Psoas muscle (tissue), 8 donors: ENCODE measurements at regions of chr7 and their contacts with region 1.

Region 1: GRCh38 chr7:98168181-98168905 is 42.9 kb upstream of the BHLHA15 start:
- DNase-seq: peak in 1 of 2 donors; percentile 62
- ATAC-seq: peak; percentile 86 to 93 (median 90)
- H3K4me3 ChIP-seq: no peak overlapping the region
- H3K27ac ChIP-seq: peak overlapping the region; percentile 50
- H3K4me1 ChIP-seq: peaks cover 25% of the 10 kb centered on the region
- H3K27me3 ChIP-seq: no peaks in the 10 kb centered on the region
- CTCF ChIP-seq: peak; percentile 90

Region 2: GRCh38 chr7:98021588-98022351 is 146.6 kb before region 1 on chr7:
- intact Hi-C with region 1: loop called (anchors 2 to 5 kb)
- DNase-seq: peak; percentile 65 to 83
- ATAC-seq: peak; percentile 61 to 88 (median 68)
- H3K4me3 ChIP-seq: no peak overlapping the region
- H3K27ac ChIP-seq: no peak overlapping the region
- H3K4me1 ChIP-seq: no peaks in the 10 kb centered on the region
- H3K27me3 ChIP-seq: no peaks in the 10 kb centered on the region
- CTCF ChIP-seq: peak; percentile 82

Region 3: DNA sequence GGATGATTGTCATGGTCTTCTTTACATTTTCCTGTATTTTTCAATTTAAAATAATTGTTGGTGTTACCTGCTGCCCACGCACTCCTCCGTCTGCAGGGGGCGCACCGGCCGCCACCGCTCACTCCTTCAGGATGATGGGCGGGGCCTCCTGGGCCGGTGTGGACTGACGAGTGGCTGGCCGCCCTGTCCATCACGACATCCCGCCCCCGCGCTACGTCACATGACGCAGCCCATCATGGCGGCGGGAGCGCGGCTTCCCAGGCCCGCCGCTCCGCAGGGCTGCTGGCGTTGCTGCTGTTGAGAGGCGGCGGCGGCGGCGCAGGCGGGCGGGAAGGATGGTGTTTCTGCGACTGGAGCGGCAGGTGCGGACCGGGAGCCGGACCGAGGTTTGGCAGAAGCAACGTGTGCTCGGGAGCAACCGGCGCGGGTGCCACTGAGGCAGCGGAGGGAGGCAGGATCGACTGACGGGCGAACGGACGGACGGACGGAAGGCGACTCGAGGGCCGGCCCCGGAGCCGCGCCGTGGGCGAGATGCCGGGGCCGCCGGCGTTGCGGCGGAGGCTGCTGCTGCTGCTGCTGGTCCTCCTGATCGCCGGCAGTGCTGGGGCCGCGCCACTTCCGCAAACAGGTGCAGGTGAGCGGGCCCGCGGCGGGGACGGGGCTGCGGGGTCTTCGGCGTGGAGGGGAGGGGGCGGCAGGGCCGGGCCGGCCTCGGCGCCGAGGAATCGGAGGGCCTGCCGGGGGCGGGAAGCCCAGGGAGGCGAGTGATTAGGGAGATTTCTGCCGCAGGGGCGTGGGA is 61.5 kb before region 1 on chr7 and contains the start of gene LMTK2:
- intact Hi-C with region 1: loop called (anchors 1 to 2 kb)
- DNase-seq: peak; percentile 96 to 98
- ATAC-seq: peak; percentile 100
- H3K4me3 ChIP-seq: peak within 1 kb of the TSS; percentile 96
- H3K27ac ChIP-seq: peak within 1 kb of the TSS; percentile 92
- H3K4me1 ChIP-seq: peaks cover 16% of the 10 kb centered on the region
- H3K27me3 ChIP-seq: peaks cover 0 to 1% (median 0%) of the 10 kb centered on the region in 3 donors
- CTCF ChIP-seq: peak; percentile 95
- total RNA-seq, gene LMTK2: 12.7 to 25.0 (median 16.1) TPM

Region 4: DNA sequence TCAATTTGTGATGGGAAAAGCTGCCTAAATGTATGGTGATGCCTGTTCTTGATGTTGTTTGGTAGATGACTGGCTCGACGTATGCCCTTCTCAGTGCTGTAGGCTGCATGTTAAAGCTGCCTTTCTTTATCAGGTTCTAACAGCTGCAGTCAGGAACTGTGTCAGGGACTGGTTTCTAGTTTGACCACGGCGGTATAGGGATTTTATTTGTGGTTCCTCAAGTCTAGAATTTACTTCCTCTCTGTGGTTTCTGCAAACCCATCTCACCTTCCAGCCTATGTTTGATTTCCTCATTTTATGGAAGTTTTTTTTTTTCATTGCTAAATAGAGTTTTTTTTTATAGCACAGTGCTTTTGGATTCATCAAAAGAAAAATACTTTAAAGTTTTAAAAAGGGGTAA is 35.2 kb before region 1 on chr7:
- intact Hi-C with region 1: loop called in 1 of 2 experiments (anchors 5 kb)
- DNase-seq: no peak
- ATAC-seq: no peak
- H3K4me3 ChIP-seq: no peak overlapping the region
- H3K27ac ChIP-seq: no peak overlapping the region
- H3K4me1 ChIP-seq: peaks cover 16% of the 10 kb centered on the region
- H3K27me3 ChIP-seq: no peaks in the 10 kb centered on the region
- CTCF ChIP-seq: no peak

Region 5: GRCh38 chr7:98314469-98314868 is 146.1 kb after region 1 on chr7:
- intact Hi-C with region 1: no loop called
- DNase-seq: no peak
- ATAC-seq: no peak
- H3K4me3 ChIP-seq: no peak overlapping the region
- H3K27ac ChIP-seq: no peak overlapping the region
- H3K4me1 ChIP-seq: no peaks in the 10 kb centered on the region
- H3K27me3 ChIP-seq: no peaks in the 10 kb centered on the region
- CTCF ChIP-seq: no peak

Region 6: DNA sequence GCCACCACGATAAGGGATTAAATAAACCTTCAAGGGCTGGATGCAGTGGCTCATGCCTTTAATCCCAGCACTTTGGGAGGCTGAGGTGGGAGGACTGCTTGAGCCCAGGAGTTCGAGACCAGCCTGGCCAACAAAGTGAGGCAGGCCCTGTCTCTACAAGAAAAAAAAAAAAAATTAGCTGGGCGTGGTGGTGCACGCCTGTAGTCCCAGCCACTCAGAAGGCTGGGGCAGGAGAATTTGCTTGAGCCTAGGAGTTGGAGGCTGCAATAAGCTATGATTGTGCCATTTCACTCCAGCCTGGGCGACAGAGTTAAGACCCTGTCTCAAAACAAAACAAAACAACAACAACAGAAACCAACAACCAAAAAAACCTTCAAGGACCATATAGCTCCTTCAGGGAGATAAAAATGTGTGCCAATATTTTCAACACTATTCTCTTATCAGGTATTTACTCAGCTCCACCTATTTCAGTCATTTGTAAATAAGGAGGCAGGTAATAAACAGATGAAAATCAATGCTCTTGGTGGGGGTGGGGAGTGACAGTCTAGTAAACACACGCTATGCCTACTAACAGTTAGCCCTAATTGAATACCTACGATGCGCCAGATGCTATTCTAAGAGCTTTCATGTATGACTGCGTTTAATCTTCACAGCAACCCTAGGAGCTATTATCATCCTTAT is 219.3 kb after region 1 on chr7:
- intact Hi-C with region 1: no loop called
- DNase-seq: no peak
- ATAC-seq: no peak
- H3K4me3 ChIP-seq: no peak overlapping the region
- H3K27ac ChIP-seq: no peak overlapping the region
- H3K4me1 ChIP-seq: no peaks in the 10 kb centered on the region
- H3K27me3 ChIP-seq: peaks cover 0 to 4% (median 3%) of the 10 kb centered on the region in 3 donors
- CTCF ChIP-seq: no peak